ENCODE measurements at regions of chr22 and their contacts with region 1.

Region 1: GRCh38 chr22:38296374-38296773 is 20.9 kb downstream of the CSNK1E start:
- DNase-seq: no peak

Region 2: DNA sequence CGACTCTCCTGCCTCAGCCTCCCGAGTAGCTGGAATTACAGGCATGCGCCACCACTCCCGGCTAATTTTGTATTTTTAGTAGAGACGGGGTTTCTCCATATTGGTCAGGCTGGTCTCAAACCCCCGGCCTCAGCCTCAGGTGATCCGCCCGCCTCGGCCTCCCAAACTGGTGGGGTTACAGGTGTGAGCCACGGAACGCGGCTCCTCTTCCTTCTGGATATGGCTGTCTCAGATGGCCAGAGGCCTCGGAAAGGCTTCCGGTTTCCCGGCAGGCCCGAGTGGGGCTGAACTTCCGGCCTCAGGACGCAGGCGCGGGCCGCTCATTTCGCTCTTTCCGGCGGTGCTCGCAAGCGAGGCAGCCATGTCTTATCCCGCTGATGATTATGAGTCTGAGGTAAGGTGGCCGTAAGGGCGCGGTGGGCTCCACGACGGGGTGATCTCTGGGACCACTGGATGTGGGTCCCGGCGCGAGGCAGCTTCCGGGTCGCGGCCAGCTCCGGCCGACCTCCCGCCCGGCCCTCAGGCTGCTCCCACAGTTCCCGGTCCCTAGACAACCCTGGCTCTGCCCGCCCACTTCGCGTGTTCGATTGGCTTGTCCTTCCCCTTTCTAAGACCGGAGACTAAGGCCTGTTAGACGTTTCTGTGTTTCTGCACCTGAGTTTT is 447.2 kb before region 1 on chr22 and contains the start of gene EIF3L:
- intact Hi-C with region 1: no loop called
- DNase-seq: peak; percentile 97
- total RNA-seq, gene EIF3L: 260 to 267 TPM

Region 3: DNA sequence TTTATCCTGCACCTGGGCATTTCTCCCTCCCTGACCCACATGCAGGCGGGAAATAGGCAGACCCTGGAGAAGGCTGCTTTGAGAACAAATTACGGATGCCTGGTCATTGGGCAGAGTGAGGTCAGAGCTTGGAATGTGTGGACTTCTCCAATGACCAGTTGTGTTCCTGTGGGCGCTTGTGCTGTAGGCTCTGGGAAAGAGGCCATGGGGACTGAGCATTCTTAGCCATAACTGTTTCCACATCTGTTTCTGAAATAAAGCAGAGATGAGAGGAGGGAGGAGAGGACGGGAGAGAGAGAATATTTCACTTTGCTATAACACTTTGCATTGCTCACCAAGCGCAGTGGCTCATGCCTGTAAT is 12.4 kb before region 1 on chr22:
- intact Hi-C with region 1: loop called in 1 of 2 experiments (anchors 2 kb)
- DNase-seq: no peak

Region 4: DNA sequence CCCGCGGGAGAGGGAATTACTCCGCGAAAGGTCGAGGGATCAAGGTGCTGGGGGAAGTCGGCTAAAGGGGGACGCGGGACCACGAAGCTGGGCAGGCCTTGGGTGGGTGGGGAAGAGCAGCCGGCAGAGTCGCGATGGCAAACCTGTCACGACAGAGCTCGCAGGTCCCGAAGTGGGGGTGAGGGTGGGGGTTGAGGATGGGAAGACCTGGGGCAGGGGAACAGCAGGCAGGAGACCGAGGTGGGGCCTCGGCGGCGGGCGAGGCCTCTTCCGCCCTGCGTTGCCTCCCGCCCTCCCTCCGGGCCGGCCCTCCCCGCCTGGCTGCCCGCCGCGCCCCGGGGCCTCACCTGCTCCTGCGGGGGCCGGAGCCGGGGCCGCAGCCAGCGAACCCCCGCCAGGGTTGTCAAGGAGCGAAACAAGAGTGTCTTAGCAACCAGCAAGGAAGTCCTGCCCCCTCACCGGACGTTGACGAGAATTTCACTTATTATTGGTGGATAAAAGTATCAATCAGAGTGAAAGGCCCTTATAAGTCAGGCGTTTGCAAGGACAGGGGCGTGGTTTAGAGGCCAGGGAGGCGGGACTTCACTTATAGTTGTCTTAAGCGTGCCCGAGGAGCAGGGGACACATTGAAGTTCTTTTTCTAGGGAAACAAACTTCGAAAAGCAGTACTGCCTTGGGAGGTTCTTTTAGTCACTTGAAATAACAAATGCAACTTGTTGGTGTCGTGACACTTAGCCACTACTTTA is 497.5 kb after region 1 on chr22 and contains the start of gene DNAL4:
- intact Hi-C with region 1: no loop called
- DNase-seq: peak; percentile 97
- total RNA-seq, gene DNAL4: 5.9 to 8.3 TPM

Region 5: DNA sequence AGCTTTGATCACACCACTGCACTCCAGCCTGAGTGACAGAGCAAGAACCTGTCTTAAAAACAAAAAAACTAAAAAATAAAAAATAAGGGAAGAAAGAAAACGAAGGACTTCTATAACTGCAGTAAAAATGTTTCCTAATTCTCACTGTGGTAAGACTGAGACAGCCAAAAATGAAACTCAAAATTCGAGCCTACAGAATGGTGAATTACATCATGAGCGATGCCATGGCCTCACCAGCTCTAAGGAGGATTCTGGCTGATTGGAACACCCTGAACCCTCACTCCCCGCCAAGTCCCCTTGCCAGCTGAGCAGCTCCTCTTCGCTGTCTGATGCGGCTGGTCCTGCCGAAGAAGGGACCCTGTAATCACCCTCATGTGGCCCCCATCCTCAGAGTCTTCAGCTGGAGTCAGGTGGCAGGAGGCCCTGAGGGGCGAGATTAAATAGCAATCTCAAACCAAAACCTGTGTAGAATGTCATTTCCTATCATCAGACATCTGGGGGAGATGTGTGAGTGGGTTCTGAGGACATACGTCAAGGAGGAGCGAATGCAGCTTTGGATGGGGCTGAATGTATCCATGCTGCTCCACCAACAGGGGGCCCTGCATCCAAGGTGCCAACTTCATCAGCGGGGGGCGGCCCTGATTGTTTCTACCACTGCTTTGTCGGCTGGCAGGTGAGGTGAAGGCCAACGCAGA is 919.2 kb after region 1 on chr22:
- intact Hi-C with region 1: no loop called
- DNase-seq: peak; percentile 45